CD4-positive, alpha-beta memory T cell (primary cell): ENCODE measurements at regions of chr3 and their contacts with region 1.

Region 1: GRCh38 chr3:12841149-12841970 is at the start of gene RPL32:
- DNase-seq: peak; percentile 90 to 92 (median 91)
- H3K4me3 ChIP-seq: peak within 1 kb of the TSS; percentile 85 to 89
- H3K4me3 Mint-ChIP-seq: peak within 1 kb of the TSS; percentile 95 to 99 (median 98)
- H3K27ac ChIP-seq: peak within 1 kb of the TSS; percentile 92
- H3K27ac Mint-ChIP-seq: peak within 1 kb of the TSS; percentile 99 to 100 (median 100)
- H3K4me1 ChIP-seq: peaks cover 40% of the 10 kb centered on the region
- H3K4me1 Mint-ChIP-seq: peaks cover 28 to 56% (median 40%) of the 10 kb centered on the region in 4 donors
- H3K27me3 ChIP-seq: no peaks in the 10 kb centered on the region
- H3K27me3 Mint-ChIP-seq: no peaks in the 10 kb centered on the region
- total RNA-seq, gene RPL32: 3,446 to 3,480 TPM

Region 2: DNA sequence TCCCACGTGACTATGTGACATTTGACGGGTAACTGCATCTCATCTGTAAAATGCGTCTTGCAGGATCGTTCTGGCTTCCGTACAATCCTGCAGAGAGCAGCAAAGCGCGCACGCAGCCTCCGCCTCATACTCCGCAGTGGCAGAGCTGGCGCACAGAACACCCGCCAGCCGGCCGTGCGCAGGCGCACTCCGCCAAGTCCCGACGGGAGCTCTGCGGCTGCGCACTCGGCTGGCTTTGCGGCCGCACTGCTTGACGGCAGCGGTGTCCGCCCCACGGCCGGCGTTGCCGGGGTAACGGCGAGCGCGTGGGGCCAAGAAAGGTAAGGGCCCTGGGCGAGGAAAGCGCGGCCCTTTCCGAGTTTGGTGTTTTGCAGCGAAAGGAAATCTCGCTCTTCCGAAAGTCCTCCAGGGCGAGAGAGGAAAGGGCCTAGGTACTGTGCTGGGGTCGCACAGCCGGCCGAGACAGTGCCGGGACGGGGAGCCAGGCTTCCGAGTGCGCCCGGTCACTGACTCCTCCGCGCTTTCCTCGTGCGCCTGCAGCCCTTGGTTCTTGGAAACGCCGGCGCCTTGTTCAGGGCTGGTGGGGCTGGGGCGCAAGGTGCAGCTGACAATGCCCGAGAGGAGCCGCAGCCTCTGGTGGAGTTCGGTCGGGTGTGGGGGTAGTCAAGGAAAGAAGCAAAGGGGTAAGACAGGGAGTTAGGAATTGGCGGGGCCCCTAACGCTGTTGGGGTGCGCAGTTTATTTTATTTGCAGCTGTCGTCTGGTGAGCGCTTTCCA is 357.0 kb before region 1 on chr3 and contains the start of gene TSEN2:
- CTCF ChIA-PET with region 1: interaction called, 5 read pairs
- POLR2A ChIA-PET with region 1: interaction called, 7 read pairs
- intact Hi-C with region 1: loop called (anchors 1 kb)
- DNase-seq: peak; percentile 96 to 100 (median 98)
- H3K4me3 ChIP-seq: peak within 1 kb of the TSS; percentile 78 to 83
- H3K4me3 Mint-ChIP-seq: peak within 1 kb of the TSS; percentile 90 to 98 (median 96)
- H3K27ac ChIP-seq: peak within 1 kb of the TSS; percentile 81
- H3K27ac Mint-ChIP-seq: peak within 1 kb of the TSS; percentile 96 to 99 (median 97)
- H3K4me1 ChIP-seq: peaks cover 28% of the 10 kb centered on the region
- H3K4me1 Mint-ChIP-seq: peaks cover 19 to 43% (median 34%) of the 10 kb centered on the region in 4 donors
- H3K27me3 ChIP-seq: no peaks in the 10 kb centered on the region
- H3K27me3 Mint-ChIP-seq: no peaks in the 10 kb centered on the region
- total RNA-seq, gene TSEN2: 18.5 to 19.6 TPM

Region 3: GRCh38 chr3:12663936-12664908 is 177.1 kb before region 1 on chr3 and contains the start of gene RAF1:
- CTCF ChIA-PET with region 1: no interaction called
- POLR2A ChIA-PET with region 1: interaction called, 19 read pairs
- intact Hi-C with region 1: no loop called
- DNase-seq: peak; percentile 97 to 98 (median 98)
- H3K4me3 ChIP-seq: peak within 1 kb of the TSS; percentile 93 to 99
- H3K4me3 Mint-ChIP-seq: peak within 1 kb of the TSS; percentile 88 to 100 (median 98)
- H3K27ac ChIP-seq: peak within 1 kb of the TSS; percentile 95
- H3K27ac Mint-ChIP-seq: peak within 1 kb of the TSS; percentile 98 to 99 (median 99)
- H3K4me1 ChIP-seq: peaks cover 40% of the 10 kb centered on the region
- H3K4me1 Mint-ChIP-seq: peaks cover 20 to 48% (median 29%) of the 10 kb centered on the region in 4 donors
- H3K27me3 ChIP-seq: no peaks in the 10 kb centered on the region
- H3K27me3 Mint-ChIP-seq: no peaks in the 10 kb centered on the region
- total RNA-seq, gene RAF1: 116 to 120 TPM

Region 4: GRCh38 chr3:12782172-12782815 is 59.1 kb before region 1 on chr3:
- CTCF ChIA-PET with region 1: interaction called, 26 read pairs
- POLR2A ChIA-PET with region 1: interaction called, 9 read pairs
- intact Hi-C with region 1: loop called (anchors 1 kb)
- DNase-seq: no peak
- H3K4me3 ChIP-seq: no peak overlapping the region
- H3K4me3 Mint-ChIP-seq: no peak overlapping the region
- H3K27ac ChIP-seq: no peak overlapping the region
- H3K27ac Mint-ChIP-seq: no peak overlapping the region
- H3K4me1 ChIP-seq: no peaks in the 10 kb centered on the region
- H3K4me1 Mint-ChIP-seq: no peaks in the 10 kb centered on the region
- H3K27me3 ChIP-seq: no peaks in the 10 kb centered on the region
- H3K27me3 Mint-ChIP-seq: peaks cover 11 to 17% of the 10 kb centered on the region in 2 donors

Region 5: DNA sequence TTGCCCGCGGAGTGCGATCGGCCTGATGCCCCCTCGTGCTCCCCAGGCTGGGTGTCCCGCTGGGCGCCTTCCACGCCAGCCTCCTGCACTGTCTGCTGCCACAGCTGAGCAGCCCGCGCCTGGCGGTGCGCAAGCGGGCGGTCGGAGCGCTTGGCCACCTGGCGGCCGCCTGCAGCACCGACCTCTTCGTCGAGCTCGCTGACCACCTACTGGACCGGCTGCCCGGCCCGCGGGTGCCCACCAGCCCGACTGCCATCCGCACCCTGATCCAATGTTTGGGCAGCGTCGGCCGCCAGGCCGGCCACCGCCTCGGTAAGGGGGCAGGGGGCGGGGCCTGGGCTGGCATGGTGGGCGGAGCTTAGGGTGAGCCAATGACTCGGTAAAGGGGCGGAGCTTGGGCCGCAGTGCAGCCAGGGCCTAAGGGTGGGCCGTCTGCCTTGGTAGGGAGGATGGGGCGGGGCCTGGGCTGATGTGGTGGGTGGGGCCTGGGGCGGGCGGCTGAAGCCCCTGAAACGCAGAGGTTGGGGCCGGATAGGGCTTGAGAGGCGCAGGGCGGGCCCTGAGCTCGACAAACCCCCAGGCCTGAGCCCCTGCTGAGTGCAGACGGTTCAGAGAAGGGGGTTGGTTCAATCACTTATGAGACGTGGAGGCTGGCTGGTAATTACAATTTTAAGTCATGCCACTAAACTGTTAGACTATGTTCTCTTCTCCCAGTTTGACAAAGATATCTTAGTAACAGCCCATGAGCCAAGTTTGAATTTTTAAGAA is 31.2 kb before region 1 on chr3:
- CTCF ChIA-PET with region 1: interaction called, 47 read pairs
- POLR2A ChIA-PET with region 1: interaction called, 44 read pairs
- intact Hi-C with region 1: loop called (anchors 1 kb)
- DNase-seq: peak; percentile 91 to 95 (median 93)
- H3K4me3 ChIP-seq: peak overlapping the region in 1 of 2 donors; percentile 51
- H3K4me3 Mint-ChIP-seq: peak overlapping the region; percentile 66 to 78 (median 70)
- H3K27ac ChIP-seq: peak overlapping the region; percentile 9
- H3K27ac Mint-ChIP-seq: peak overlapping the region; percentile 14 to 87 (median 79)
- H3K4me1 ChIP-seq: peaks cover 13% of the 10 kb centered on the region
- H3K4me1 Mint-ChIP-seq: peaks cover 0 to 21% (median 11%) of the 10 kb centered on the region in 4 donors
- H3K27me3 ChIP-seq: no peaks in the 10 kb centered on the region
- H3K27me3 Mint-ChIP-seq: no peaks in the 10 kb centered on the region

Region 6: GRCh38 chr3:12891985-12892839 is 50.9 kb after region 1 on chr3:
- CTCF ChIA-PET with region 1: interaction called, 11 read pairs
- POLR2A ChIA-PET with region 1: interaction called, 3 read pairs
- intact Hi-C with region 1: no loop called
- DNase-seq: peak; percentile 46 to 53 (median 49)
- H3K4me3 ChIP-seq: no peak overlapping the region
- H3K4me3 Mint-ChIP-seq: peak overlapping the region in 7 of 8 donors; percentile 12 to 72 (median 60)
- H3K27ac ChIP-seq: no peak overlapping the region
- H3K27ac Mint-ChIP-seq: peak overlapping the region in 4 of 7 donors; percentile 2 to 56 (median 16)
- H3K4me1 ChIP-seq: peaks cover 7% of the 10 kb centered on the region
- H3K4me1 Mint-ChIP-seq: peaks cover 7 to 19% (median 13%) of the 10 kb centered on the region in 4 donors
- H3K27me3 ChIP-seq: no peaks in the 10 kb centered on the region
- H3K27me3 Mint-ChIP-seq: peaks cover 18 to 20% of the 10 kb centered on the region in 2 donors

Region 7: GRCh38 chr3:14651440-14652251 is 1810.3 kb after region 1 on chr3 and contains the start of gene CCDC174:
- CTCF ChIA-PET with region 1: no interaction called
- POLR2A ChIA-PET with region 1: interaction called, 14 read pairs
- intact Hi-C with region 1: no loop called
- DNase-seq: peak; percentile 95 to 98 (median 97)
- H3K4me3 ChIP-seq: peak within 1 kb of the TSS; percentile 67 to 98
- H3K4me3 Mint-ChIP-seq: peak within 1 kb of the TSS; percentile 84 to 99 (median 94)
- H3K27ac ChIP-seq: peak within 1 kb of the TSS; percentile 98
- H3K27ac Mint-ChIP-seq: peak within 1 kb of the TSS; percentile 91 to 100 (median 98)
- H3K4me1 ChIP-seq: peaks cover 37% of the 10 kb centered on the region
- H3K4me1 Mint-ChIP-seq: peaks cover 27 to 50% (median 40%) of the 10 kb centered on the region in 4 donors
- H3K27me3 ChIP-seq: no peaks in the 10 kb centered on the region
- H3K27me3 Mint-ChIP-seq: no peaks in the 10 kb centered on the region
- total RNA-seq, gene CCDC174: 45.9 to 51.8 TPM